Activated CD8-positive, alpha-beta T cell treated with anti-CD3 and anti-CD28 coated beads for 36 hours (primary cell): ENCODE measurements at regions of chr12 and their contacts with region 1.

Region 1: DNA sequence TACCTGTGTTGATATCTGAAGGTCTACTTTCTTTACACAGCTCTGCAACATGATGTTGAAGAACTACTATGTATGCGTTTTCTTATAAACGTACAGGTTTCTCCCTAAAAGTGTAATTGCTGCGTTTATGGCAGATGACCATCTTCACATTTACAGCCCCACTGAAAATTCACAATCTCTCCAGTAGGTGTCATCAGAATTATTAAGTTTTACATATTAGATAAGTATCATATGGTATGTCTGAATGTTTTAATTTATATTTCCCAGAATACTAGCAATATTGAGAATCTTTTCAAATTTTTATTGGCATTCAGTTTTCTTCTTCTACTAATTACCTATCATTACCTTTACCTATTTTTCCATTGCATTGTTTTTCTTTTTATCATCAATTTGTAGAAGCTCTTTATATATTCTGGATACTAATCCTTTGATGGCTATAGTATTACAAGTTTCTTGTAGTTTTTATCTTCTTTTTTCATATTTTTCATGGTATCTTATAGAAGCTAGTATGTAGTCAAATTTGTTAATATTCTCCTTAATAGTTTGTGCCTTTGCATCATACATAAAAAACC is 123.5 kb downstream of the CAPZA3 start:
- DNase-seq: no peak
- ATAC-seq: no peak
- H3K4me3 Mint-ChIP-seq: no peak overlapping the region
- H3K27ac Mint-ChIP-seq: no peak overlapping the region
- H3K4me1 Mint-ChIP-seq: no peaks in the 10 kb centered on the region
- H3K27me3 Mint-ChIP-seq: peaks cover 3% of the 10 kb centered on the region
- CTCF ChIP-seq: peak; percentile 36

Region 2: GRCh38 chr12:18849080-18849479 is 12.3 kb before region 1 on chr12:
- CTCF ChIA-PET with region 1: no interaction called
- POLR2A ChIA-PET with region 1: no interaction called
- intact Hi-C with region 1: no loop called
- DNase-seq: no peak
- ATAC-seq: no peak
- H3K4me3 Mint-ChIP-seq: no peak overlapping the region
- H3K27ac Mint-ChIP-seq: no peak overlapping the region
- H3K4me1 Mint-ChIP-seq: no peaks in the 10 kb centered on the region
- H3K27me3 Mint-ChIP-seq: peaks cover 4% of the 10 kb centered on the region
- CTCF ChIP-seq: no peak

Region 3: DNA sequence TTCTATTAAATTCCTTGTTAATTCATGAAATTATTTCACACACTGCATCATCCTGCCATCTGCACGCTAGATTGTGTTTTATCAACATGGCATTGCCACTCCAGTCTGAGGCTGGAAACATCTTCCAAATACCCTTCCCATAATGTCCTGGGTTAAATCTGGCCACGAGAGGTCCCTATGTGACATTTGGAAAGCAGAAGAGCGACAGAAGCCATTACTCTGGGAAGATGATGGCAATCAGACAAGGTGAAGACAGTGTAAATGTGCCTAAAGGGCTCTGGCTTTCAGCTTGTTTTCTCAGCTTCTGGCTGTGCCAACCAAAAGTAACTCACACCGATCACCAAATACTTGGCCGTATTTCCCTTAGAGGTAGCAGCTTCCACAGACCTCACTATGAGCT is 21.3 kb after region 1 on chr12:
- CTCF ChIA-PET with region 1: no interaction called
- POLR2A ChIA-PET with region 1: no interaction called
- intact Hi-C with region 1: no loop called
- DNase-seq: no peak
- ATAC-seq: no peak
- H3K4me3 Mint-ChIP-seq: no peak overlapping the region
- H3K27ac Mint-ChIP-seq: no peak overlapping the region
- H3K4me1 Mint-ChIP-seq: no peaks in the 10 kb centered on the region
- H3K27me3 Mint-ChIP-seq: no peaks in the 10 kb centered on the region
- CTCF ChIP-seq: no peak

Region 4: GRCh38 chr12:19186722-19187661 is 325.6 kb after region 1 on chr12:
- CTCF ChIA-PET with region 1: interaction called, 12 read pairs
- POLR2A ChIA-PET with region 1: no interaction called
- intact Hi-C with region 1: loop called (anchors 5 kb)
- DNase-seq: no peak
- ATAC-seq: no peak
- H3K4me3 Mint-ChIP-seq: no peak overlapping the region
- H3K27ac Mint-ChIP-seq: no peak overlapping the region
- H3K4me1 Mint-ChIP-seq: peaks cover 6% of the 10 kb centered on the region
- H3K27me3 Mint-ChIP-seq: no peaks in the 10 kb centered on the region
- CTCF ChIP-seq: peak; percentile 74